K562 (cell line): ENCODE measurements at regions of chr7 and their contacts with region 1.

Region 1: GRCh38 chr7:113026941-113027340 is 59.7 kb downstream of the GPR85 start:
- DNase-seq: no peak
- ATAC-seq: no peak
- H3K4me3 ChIP-seq: no peak overlapping the region
- H3K27ac ChIP-seq: no peak overlapping the region
- H3K4me1 ChIP-seq: no peaks in the 10 kb centered on the region
- H3K27me3 ChIP-seq: no peaks in the 10 kb centered on the region
- CTCF ChIP-seq: no peak
- EP300 ChIP-seq: no peak
- POLR2A ChIP-seq: no peak
- RAD21 ChIP-seq: no peak

Region 2: GRCh38 chr7:113289140-113289740 is 262.3 kb after region 1 on chr7:
- CTCF ChIA-PET with region 1: no interaction called
- POLR2A ChIA-PET with region 1: no interaction called
- in situ Hi-C with region 1: loop called (anchors 10 kb)
- intact Hi-C with region 1: no loop called
- DNase-seq: peak in 2 of 4 experiments; percentile 21 to 62
- ATAC-seq: peak; percentile 96
- H3K4me3 ChIP-seq: no peak overlapping the region
- H3K27ac ChIP-seq: no peak overlapping the region
- H3K4me1 ChIP-seq: peaks cover 0 to 6% of the 10 kb centered on the region in 2 experiments; a peak in 1 of 5 replicates
- H3K27me3 ChIP-seq: no peaks in the 10 kb centered on the region; a peak in 1 of 5 replicates
- CTCF ChIP-seq: peak; percentile 74 to 89 (median 75)
- EP300 ChIP-seq: no peak
- POLR2A ChIP-seq: no peak
- RAD21 ChIP-seq: peak; percentile 84 to 86

Region 3: DNA sequence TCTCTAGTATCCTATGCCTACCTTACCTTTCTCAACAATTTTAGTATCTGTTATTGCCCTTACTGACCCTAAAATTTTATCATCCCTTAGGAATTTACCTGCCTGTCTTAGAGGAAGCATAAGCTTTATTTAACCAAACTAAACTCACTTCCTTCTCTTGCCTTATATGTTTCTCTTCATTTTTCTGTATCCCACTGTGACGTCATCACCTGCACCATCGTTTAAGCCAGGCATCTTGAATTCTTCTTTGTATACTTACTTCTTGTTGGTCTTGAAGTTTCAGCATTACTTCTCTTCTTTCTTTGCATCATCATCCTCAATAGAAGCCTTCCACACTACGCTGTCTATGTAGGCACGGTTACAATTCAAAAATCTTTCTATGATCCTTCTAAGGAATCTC is 322.4 kb after region 1 on chr7:
- CTCF ChIA-PET with region 1: no interaction called
- POLR2A ChIA-PET with region 1: no interaction called
- in situ Hi-C with region 1: no loop called
- intact Hi-C with region 1: no loop called
- DNase-seq: no peak
- ATAC-seq: no peak
- H3K4me3 ChIP-seq: no peak overlapping the region
- H3K27ac ChIP-seq: no peak overlapping the region
- H3K4me1 ChIP-seq: no peaks in the 10 kb centered on the region
- H3K27me3 ChIP-seq: no peaks in the 10 kb centered on the region
- CTCF ChIP-seq: no peak
- EP300 ChIP-seq: no peak
- POLR2A ChIP-seq: no peak
- RAD21 ChIP-seq: no peak